ENCODE measurements at regions of chr3 and their contacts with region 1.

Region 1: GRCh38 chr3:12841149-12841970 is at the start of gene RPL32:
- DNase-seq: peak; percentile 72 to 94 (median 92)
- ATAC-seq: peak; percentile 95
- H3K4me3 ChIP-seq: peak within 1 kb of the TSS; percentile 90
- H3K4me3 Mint-ChIP-seq: peak within 1 kb of the TSS; percentile 92 to 97 (median 96)
- H3K27ac ChIP-seq: peak within 1 kb of the TSS; percentile 92
- H3K27ac Mint-ChIP-seq: peak within 1 kb of the TSS; percentile 98 to 100 (median 100)
- H3K4me1 ChIP-seq: peaks cover 16 to 28% of the 10 kb centered on the region in 2 donors
- H3K4me1 Mint-ChIP-seq: peaks cover 31 to 54% (median 47%) of the 10 kb centered on the region in 7 donors
- H3K27me3 ChIP-seq: no peaks in the 10 kb centered on the region
- H3K27me3 Mint-ChIP-seq: no peaks in the 10 kb centered on the region
- total RNA-seq, gene RPL32: 1,890 to 4,471 (median 4,246) TPM

Region 2: GRCh38 chr3:12706504-12707253 is 134.7 kb before region 1 on chr3:
- CTCF ChIA-PET with region 1: interaction called, 4 read pairs
- POLR2A ChIA-PET with region 1: no interaction called
- intact Hi-C with region 1: loop called in 1 of 2 experiments (anchors 1 kb)
- DNase-seq: peak; percentile 31 to 65 (median 49)
- ATAC-seq: peak; percentile 98
- H3K4me3 ChIP-seq: no peak overlapping the region
- H3K4me3 Mint-ChIP-seq: no peak overlapping the region
- H3K27ac ChIP-seq: no peak overlapping the region
- H3K27ac Mint-ChIP-seq: peak overlapping the region in 1 of 9 donors; percentile 36
- H3K4me1 ChIP-seq: no peaks in the 10 kb centered on the region
- H3K4me1 Mint-ChIP-seq: no peaks in the 10 kb centered on the region
- H3K27me3 ChIP-seq: no peaks in the 10 kb centered on the region
- H3K27me3 Mint-ChIP-seq: peaks cover 0 to 12% (median 0%) of the 10 kb centered on the region in 5 donors

Region 3: DNA sequence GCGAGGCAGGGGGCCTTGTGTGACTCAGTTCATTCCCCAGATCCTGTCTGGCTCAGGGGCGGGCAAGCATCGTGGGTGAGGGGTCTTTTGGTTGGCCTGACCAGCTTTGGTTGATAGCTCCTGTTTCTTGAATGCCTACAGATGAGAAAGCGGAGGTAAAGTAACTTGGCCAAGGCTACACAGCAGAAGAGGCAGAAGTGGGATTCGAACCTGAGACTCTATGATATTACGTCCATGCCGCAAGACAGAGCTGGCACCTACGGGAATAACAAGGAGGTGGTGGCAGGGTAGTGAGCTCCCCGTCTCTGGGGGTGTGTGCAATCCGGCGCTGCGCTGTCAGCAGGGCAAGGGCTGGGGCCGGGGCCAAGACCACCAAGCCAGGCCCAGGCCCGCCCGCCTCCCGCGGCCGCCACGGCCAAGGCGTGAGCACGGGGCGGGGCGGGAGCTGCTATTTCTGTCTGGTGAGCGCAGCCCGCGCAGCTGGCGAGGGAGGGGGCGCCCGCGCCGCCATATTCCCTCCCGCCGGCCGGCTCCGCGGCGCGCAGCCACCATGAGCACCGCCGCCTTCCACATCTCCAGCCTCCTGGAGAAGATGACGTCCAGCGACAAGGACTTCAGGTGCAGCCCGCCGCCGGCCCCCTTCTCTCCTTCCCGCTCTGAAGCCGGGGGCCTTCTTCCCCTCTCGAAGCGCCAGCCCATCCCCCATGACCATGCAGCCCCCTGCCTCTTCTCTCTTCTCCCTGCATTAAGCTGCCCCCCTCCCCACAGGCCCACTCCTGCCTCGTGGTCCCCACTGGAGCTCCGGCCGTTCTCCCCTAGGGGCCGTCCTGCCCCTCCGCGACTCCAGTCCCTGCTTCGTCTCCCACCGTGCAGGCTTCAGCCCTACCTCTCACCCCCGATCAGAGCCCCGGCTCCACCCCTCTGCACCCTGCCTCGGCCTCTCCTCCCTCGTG is 44.9 kb before region 1 on chr3 and contains the start of gene CAND2:
- CTCF ChIA-PET with region 1: interaction called, 5 read pairs
- POLR2A ChIA-PET with region 1: interaction called, 26 read pairs
- intact Hi-C with region 1: loop called in 1 of 2 experiments (anchors 2 kb)
- DNase-seq: peak; percentile 22 to 58 (median 40)
- ATAC-seq: peak; percentile 82
- H3K4me3 ChIP-seq: peak within 1 kb of the TSS; percentile 66
- H3K4me3 Mint-ChIP-seq: peak within 1 kb of the TSS; percentile 74 to 95 (median 89)
- H3K27ac ChIP-seq: peak within 1 kb of the TSS; percentile 55
- H3K27ac Mint-ChIP-seq: peak within 1 kb of the TSS in 8 of 9 donors; percentile 76 to 97 (median 82)
- H3K4me1 ChIP-seq: peaks cover 0 to 5% of the 10 kb centered on the region in 2 donors
- H3K4me1 Mint-ChIP-seq: peaks cover 0 to 28% (median 11%) of the 10 kb centered on the region in 7 donors
- H3K27me3 ChIP-seq: no peaks in the 10 kb centered on the region
- H3K27me3 Mint-ChIP-seq: peaks cover 0 to 33% (median 6%) of the 10 kb centered on the region in 5 donors
- total RNA-seq, gene CAND2: 0.15 to 8.2 (median 4.3) TPM

Region 4: DNA sequence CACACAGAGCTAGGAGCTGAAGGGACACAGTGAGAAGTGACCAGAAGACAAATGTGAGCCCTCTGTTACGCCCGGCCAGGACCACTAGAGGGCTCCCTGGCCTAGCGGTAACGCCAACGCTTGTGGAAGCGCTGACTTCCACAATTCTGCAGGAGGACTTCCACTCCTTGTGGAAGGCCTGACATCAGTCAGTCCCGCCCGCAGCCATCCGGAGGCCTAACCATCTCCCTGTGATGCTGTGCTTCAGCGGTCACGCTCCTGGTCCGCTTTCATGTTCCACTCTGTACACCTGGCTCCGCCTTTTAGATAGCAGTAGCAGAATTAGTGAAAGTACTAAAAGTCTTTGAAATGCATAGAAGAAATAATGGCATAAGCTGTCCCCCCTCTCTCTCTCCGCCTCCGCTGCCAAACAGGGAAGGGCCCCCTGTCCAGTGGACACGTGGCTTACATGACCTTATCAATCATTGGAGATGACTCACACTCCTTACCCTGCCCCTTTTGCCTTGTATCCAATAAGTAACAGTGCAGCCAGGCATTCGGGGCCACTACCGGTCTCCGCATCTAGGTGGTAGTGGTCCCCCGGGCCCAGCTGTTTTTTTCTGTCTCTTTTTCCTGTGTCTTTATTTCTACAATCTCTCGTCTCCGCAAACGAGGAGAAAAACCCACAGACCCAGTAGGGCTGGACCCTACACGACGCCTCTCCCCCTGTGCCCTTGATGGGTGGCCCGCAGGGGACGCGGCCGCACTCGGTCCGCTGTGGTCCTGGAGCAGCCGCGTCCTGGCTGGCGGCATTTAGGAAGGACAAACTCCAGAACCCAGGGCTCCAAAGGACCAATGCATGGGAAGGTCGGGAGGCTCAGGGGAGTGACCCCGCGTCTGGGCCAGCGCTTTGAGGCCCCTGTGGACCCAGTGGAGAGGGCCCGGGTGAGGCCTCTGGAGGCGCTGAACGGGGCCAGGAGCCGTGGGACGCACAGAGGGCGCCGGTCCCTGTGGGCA is 27.0 kb after region 1 on chr3:
- CTCF ChIA-PET with region 1: no interaction called
- POLR2A ChIA-PET with region 1: no interaction called
- intact Hi-C with region 1: loop called in 1 of 2 experiments (anchors 1 kb)
- DNase-seq: peak; percentile 32 to 68 (median 50)
- ATAC-seq: peak; percentile 87
- H3K4me3 ChIP-seq: peak overlapping the region; percentile 60
- H3K4me3 Mint-ChIP-seq: peak overlapping the region; percentile 79 to 92 (median 86)
- H3K27ac ChIP-seq: no peak overlapping the region
- H3K27ac Mint-ChIP-seq: peak overlapping the region in 2 of 9 donors; percentile 4 to 53
- H3K4me1 ChIP-seq: no peaks in the 10 kb centered on the region
- H3K4me1 Mint-ChIP-seq: peaks cover 0 to 14% (median 10%) of the 10 kb centered on the region in 7 donors
- H3K27me3 ChIP-seq: peaks cover 0 to 5% of the 10 kb centered on the region in 2 donors
- H3K27me3 Mint-ChIP-seq: peaks cover 9 to 35% (median 14%) of the 10 kb centered on the region in 5 donors

Region 5: GRCh38 chr3:12885583-12885930 is 44.2 kb after region 1 on chr3:
- CTCF ChIA-PET with region 1: no interaction called
- POLR2A ChIA-PET with region 1: no interaction called
- intact Hi-C with region 1: no loop called
- DNase-seq: no peak
- ATAC-seq: no peak
- H3K4me3 ChIP-seq: no peak overlapping the region
- H3K4me3 Mint-ChIP-seq: peak overlapping the region in 5 of 10 donors; percentile 58 to 77 (median 66)
- H3K27ac ChIP-seq: no peak overlapping the region
- H3K27ac Mint-ChIP-seq: no peak overlapping the region
- H3K4me1 ChIP-seq: peaks cover 0 to 12% of the 10 kb centered on the region in 2 donors
- H3K4me1 Mint-ChIP-seq: peaks cover 0 to 17% (median 11%) of the 10 kb centered on the region in 7 donors
- H3K27me3 ChIP-seq: no peaks in the 10 kb centered on the region
- H3K27me3 Mint-ChIP-seq: peaks cover 0 to 38% (median 16%) of the 10 kb centered on the region in 5 donors

Region 6: GRCh38 chr3:13452490-13453335 is 611.4 kb after region 1 on chr3:
- CTCF ChIA-PET with region 1: no interaction called
- POLR2A ChIA-PET with region 1: no interaction called
- intact Hi-C with region 1: loop called in 1 of 2 experiments (anchors 10 kb)
- DNase-seq: peak in 8 of 9 donors; percentile 30 to 70 (median 61)
- ATAC-seq: peak; percentile 55
- H3K4me3 ChIP-seq: peak overlapping the region; percentile 94
- H3K4me3 Mint-ChIP-seq: peak overlapping the region; percentile 79 to 99 (median 97)
- H3K27ac ChIP-seq: peak overlapping the region; percentile 74
- H3K27ac Mint-ChIP-seq: peak overlapping the region in 7 of 9 donors; percentile 49 to 99 (median 97)
- H3K4me1 ChIP-seq: peaks cover 13 to 15% of the 10 kb centered on the region in 2 donors
- H3K4me1 Mint-ChIP-seq: peaks cover 0 to 33% (median 16%) of the 10 kb centered on the region in 7 donors
- H3K27me3 ChIP-seq: no peaks in the 10 kb centered on the region
- H3K27me3 Mint-ChIP-seq: no peaks in the 10 kb centered on the region

Region 7: GRCh38 chr3:14431892-14432834 is 1590.8 kb after region 1 on chr3:
- CTCF ChIA-PET with region 1: no interaction called
- POLR2A ChIA-PET with region 1: no interaction called
- intact Hi-C with region 1: loop called in 1 of 2 experiments (anchors 1 kb)
- DNase-seq: peak; percentile 73 to 94 (median 91)
- ATAC-seq: peak; percentile 89
- H3K4me3 ChIP-seq: peak overlapping the region; percentile 53
- H3K4me3 Mint-ChIP-seq: peak overlapping the region; percentile 51 to 90 (median 78)
- H3K27ac ChIP-seq: peak overlapping the region; percentile 84
- H3K27ac Mint-ChIP-seq: peak overlapping the region; percentile 87 to 100 (median 98)
- H3K4me1 ChIP-seq: peaks cover 55 to 81% of the 10 kb centered on the region in 2 donors
- H3K4me1 Mint-ChIP-seq: peaks cover 57 to 85% (median 75%) of the 10 kb centered on the region in 7 donors
- H3K27me3 ChIP-seq: no peaks in the 10 kb centered on the region
- H3K27me3 Mint-ChIP-seq: no peaks in the 10 kb centered on the region